ENCODE measurements at regions of chr20 and their contacts with region 1.

Region 1: DNA sequence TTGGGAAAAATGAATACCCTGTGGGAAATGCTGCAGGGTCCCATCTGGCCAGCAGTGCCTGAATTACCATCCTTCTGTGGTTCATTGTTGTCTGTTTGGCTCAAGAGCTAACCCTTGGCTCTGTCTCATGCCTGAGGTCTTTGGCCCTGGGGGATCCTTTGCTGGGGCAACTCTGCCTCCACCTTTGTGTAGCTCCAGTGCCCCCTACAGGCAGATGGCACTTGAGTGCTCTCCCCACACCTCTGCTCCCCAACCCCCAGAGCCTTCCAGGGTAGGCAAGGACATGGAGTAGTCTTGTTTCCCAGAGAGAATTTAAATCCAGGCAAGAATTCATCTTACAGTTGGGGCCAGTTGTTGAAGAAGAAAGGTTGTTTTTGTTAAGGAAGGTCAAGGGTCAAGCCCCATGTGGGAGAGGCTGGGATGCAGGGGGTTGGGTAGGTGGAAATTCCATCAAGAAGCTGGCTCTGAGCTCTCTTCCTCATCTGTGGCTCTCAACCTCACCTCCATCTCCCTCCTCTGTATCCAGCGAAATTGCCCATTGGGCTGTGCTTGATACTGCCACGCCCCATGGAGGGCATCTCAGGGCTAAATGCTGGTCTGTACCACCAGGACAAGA is 44.2 kb downstream of the ZNF831 start:
- DNase-seq: peak; percentile 88
- ATAC-seq: peak; percentile 96
- H3K4me3 Mint-ChIP-seq: no peak overlapping the region
- H3K27ac Mint-ChIP-seq: peak overlapping the region; percentile 72
- H3K4me1 Mint-ChIP-seq: peaks cover 28% of the 10 kb centered on the region
- H3K27me3 Mint-ChIP-seq: no peaks in the 10 kb centered on the region
- CTCF ChIP-seq: peak; percentile 87

Region 2: GRCh38 chr20:59032023-59032712 is 175.7 kb before region 1 on chr20 and contains the start of gene ATP5F1E:
- CTCF ChIA-PET with region 1: interaction called, 13 read pairs
- POLR2A ChIA-PET with region 1: no interaction called
- intact Hi-C with region 1: no loop called
- DNase-seq: peak; percentile 97
- ATAC-seq: peak; percentile 99
- H3K4me3 Mint-ChIP-seq: peak within 1 kb of the TSS; percentile 78
- H3K27ac Mint-ChIP-seq: peak within 1 kb of the TSS; percentile 96
- H3K4me1 Mint-ChIP-seq: peaks cover 72% of the 10 kb centered on the region
- H3K27me3 Mint-ChIP-seq: no peaks in the 10 kb centered on the region
- CTCF ChIP-seq: no peak
- total RNA-seq, gene ATP5F1E: 67.4 to 68.8 TPM

Region 3: GRCh38 chr20:59082077-59082740 is 125.6 kb before region 1 on chr20:
- CTCF ChIA-PET with region 1: interaction called, 234 read pairs
- POLR2A ChIA-PET with region 1: interaction called, 9 read pairs
- intact Hi-C with region 1: no loop called
- DNase-seq: no peak
- ATAC-seq: no peak
- H3K4me3 Mint-ChIP-seq: no peak overlapping the region
- H3K27ac Mint-ChIP-seq: no peak overlapping the region
- H3K4me1 Mint-ChIP-seq: peaks cover 15% of the 10 kb centered on the region
- H3K27me3 Mint-ChIP-seq: peaks cover 2% of the 10 kb centered on the region
- CTCF ChIP-seq: peak; percentile 38

Region 4: GRCh38 chr20:59102841-59103299 is 105.0 kb before region 1 on chr20:
- CTCF ChIA-PET with region 1: interaction called, 79 read pairs
- POLR2A ChIA-PET with region 1: no interaction called
- intact Hi-C with region 1: no loop called
- DNase-seq: no peak
- ATAC-seq: peak; percentile 77
- H3K4me3 Mint-ChIP-seq: no peak overlapping the region
- H3K27ac Mint-ChIP-seq: peak overlapping the region; percentile 26
- H3K4me1 Mint-ChIP-seq: peaks cover 17% of the 10 kb centered on the region
- H3K27me3 Mint-ChIP-seq: no peaks in the 10 kb centered on the region
- CTCF ChIP-seq: no peak

Region 5: DNA sequence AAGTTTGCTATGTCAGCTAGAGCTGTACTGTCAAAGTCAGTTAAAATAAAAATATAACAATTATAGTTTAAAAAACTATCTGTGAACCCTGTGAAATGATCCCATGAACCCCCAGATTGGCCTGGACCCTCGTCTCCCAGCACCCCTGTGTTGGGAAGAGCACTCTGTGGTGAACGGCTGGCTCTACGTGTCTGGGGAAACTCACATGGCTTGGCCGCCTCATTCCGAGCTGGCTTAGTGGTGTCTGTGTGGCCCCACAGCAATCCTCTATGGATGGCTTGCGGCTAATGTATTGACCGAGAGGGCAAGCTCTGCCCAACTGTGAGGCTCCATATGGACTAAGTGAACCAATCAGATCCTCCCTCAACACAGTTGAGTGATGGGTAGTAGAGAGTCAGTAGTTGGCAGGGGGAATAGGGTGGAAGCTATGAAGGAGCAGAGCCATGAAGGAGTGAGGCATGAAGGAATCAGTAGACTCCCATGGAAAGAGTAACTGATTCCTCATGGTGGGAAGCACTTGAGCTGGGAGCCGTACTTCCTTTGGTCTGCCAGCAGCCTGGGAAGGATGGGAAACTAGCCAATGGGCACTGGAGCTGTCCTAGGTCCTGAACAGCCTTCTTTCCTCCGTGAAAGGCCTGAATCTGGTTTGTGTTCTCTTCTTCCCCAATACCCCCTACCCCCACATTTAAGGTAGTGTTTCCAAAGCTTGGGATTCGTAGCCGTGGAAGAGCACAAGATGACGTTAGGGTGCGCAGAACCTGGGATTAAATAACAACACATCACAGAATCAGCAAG is 65.9 kb before region 1 on chr20:
- CTCF ChIA-PET with region 1: interaction called, 12 read pairs
- POLR2A ChIA-PET with region 1: no interaction called
- intact Hi-C with region 1: no loop called
- DNase-seq: no peak
- ATAC-seq: no peak
- H3K4me3 Mint-ChIP-seq: no peak overlapping the region
- H3K27ac Mint-ChIP-seq: no peak overlapping the region
- H3K4me1 Mint-ChIP-seq: peaks cover 51% of the 10 kb centered on the region
- H3K27me3 Mint-ChIP-seq: no peaks in the 10 kb centered on the region
- CTCF ChIP-seq: no peak

Region 6: GRCh38 chr20:59170406-59171349 is 37.2 kb before region 1 on chr20:
- CTCF ChIA-PET with region 1: interaction called, 27 read pairs
- POLR2A ChIA-PET with region 1: no interaction called
- intact Hi-C with region 1: no loop called
- DNase-seq: no peak
- ATAC-seq: no peak
- H3K4me3 Mint-ChIP-seq: no peak overlapping the region
- H3K27ac Mint-ChIP-seq: peak overlapping the region; percentile 74
- H3K4me1 Mint-ChIP-seq: peaks cover 91% of the 10 kb centered on the region
- H3K27me3 Mint-ChIP-seq: no peaks in the 10 kb centered on the region
- CTCF ChIP-seq: no peak

Region 7: DNA sequence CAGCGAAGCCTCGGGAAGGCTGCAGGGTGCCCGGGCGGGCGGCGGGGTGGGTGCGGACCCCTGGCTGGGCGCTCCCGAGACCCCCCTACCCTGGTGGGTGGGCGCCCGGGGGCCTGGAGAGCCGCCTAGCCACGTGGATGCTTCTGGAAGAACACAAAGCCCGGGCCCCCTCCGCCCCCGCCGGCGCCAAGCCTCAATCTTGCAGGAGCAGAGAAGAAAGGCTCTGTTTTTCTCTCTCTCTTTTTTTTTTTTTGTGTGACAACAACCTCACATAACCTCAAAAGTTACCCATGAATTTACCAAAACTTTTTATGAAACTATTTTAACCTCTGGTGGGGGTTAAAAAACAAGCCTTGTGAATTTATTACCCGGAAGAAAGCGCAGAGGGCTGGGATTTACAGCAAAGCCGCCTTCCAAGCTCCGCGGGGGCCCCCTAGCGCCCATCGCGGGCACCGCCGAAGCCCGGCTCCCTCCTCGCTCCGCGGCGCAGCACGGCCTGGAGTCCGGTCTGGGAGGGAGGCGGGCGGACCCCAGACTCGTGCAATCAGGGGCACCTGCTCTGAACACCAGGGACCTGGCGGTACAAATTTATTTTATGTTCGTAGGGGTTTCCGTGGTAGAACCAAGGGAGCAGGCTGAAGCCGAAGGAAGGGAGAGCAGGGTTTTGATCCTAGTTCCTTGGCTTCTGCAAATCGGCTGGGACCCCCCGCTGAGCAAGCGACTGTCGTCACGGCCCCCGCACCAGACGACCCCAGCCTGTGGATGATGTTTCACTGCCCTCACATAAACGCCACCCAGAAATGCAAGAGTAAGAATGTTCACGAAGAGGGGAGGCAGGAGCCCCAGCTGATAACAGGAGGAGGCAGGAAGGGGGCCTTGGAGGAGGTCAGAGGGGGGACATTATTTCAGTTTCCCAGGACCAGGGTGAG is 14.7 kb after region 1 on chr20:
- CTCF ChIA-PET with region 1: interaction called, 34 read pairs
- POLR2A ChIA-PET with region 1: interaction called, 5 read pairs
- intact Hi-C with region 1: no loop called
- DNase-seq: peak; percentile 86
- ATAC-seq: peak; percentile 96
- H3K4me3 Mint-ChIP-seq: peak overlapping the region; percentile 68
- H3K27ac Mint-ChIP-seq: peak overlapping the region; percentile 76
- H3K4me1 Mint-ChIP-seq: peaks cover 31% of the 10 kb centered on the region
- H3K27me3 Mint-ChIP-seq: no peaks in the 10 kb centered on the region
- CTCF ChIP-seq: peak; percentile 91